Caco-2 (cell line): ENCODE measurements at regions of chr20 and their contacts with region 1.

Region 1: GRCh38 chr20:2651772-2652723 is at the start of gene NOP56:
- DNase-seq: peak; percentile 95 to 99
- H3K4me3 ChIP-seq: peak within 1 kb of the TSS; percentile 99
- H3K4me3 Mint-ChIP-seq: peak within 1 kb of the TSS; percentile 90
- H3K27ac Mint-ChIP-seq: peak within 1 kb of the TSS; percentile 96
- H3K4me1 ChIP-seq: peaks cover 12% of the 10 kb centered on the region
- H3K4me1 Mint-ChIP-seq: peaks cover 7% of the 10 kb centered on the region
- H3K27me3 ChIP-seq: no peaks in the 10 kb centered on the region
- H3K27me3 Mint-ChIP-seq: no peaks in the 10 kb centered on the region
- CTCF ChIP-seq: no peak
- total RNA-seq, gene NOP56: 497 and 524 TPM in 2 replicates

Region 2: GRCh38 chr20:2470423-2471193 is 181.4 kb before region 1 on chr20 and contains the start of gene SNRPB:
- CTCF ChIA-PET with region 1: interaction called, 5 read pairs
- POLR2A ChIA-PET with region 1: interaction called, 13 read pairs
- intact Hi-C with region 1: no loop called
- DNase-seq: peak; percentile 98
- H3K4me3 ChIP-seq: peak within 1 kb of the TSS; percentile 73
- H3K4me3 Mint-ChIP-seq: peak within 1 kb of the TSS; percentile 79
- H3K27ac Mint-ChIP-seq: peak within 1 kb of the TSS; percentile 99
- H3K4me1 ChIP-seq: peaks cover 11% of the 10 kb centered on the region
- H3K4me1 Mint-ChIP-seq: peaks cover 14% of the 10 kb centered on the region
- H3K27me3 ChIP-seq: no peaks in the 10 kb centered on the region
- H3K27me3 Mint-ChIP-seq: no peaks in the 10 kb centered on the region
- CTCF ChIP-seq: no peak
- total RNA-seq, gene SNRPB: 532 and 533 TPM in 2 replicates

Region 3: GRCh38 chr20:2508631-2509467 is 143.2 kb before region 1 on chr20 and contains the start of gene ZNF343:
- CTCF ChIA-PET with region 1: no interaction called
- POLR2A ChIA-PET with region 1: no interaction called
- intact Hi-C with region 1: loop called (anchors 5 kb)
- DNase-seq: peak; percentile 79 to 84
- H3K4me3 ChIP-seq: peak within 1 kb of the TSS; percentile 90
- H3K4me3 Mint-ChIP-seq: peak within 1 kb of the TSS; percentile 88
- H3K27ac Mint-ChIP-seq: peak within 1 kb of the TSS; percentile 92
- H3K4me1 ChIP-seq: peaks cover 13% of the 10 kb centered on the region
- H3K4me1 Mint-ChIP-seq: peaks cover 10% of the 10 kb centered on the region
- H3K27me3 ChIP-seq: no peaks in the 10 kb centered on the region
- H3K27me3 Mint-ChIP-seq: peaks cover 2% of the 10 kb centered on the region
- CTCF ChIP-seq: no peak
- total RNA-seq, gene ZNF343: 8.0 and 11.0 TPM in 2 replicates

Region 4: GRCh38 chr20:2538931-2539720 is 112.9 kb before region 1 on chr20:
- CTCF ChIA-PET with region 1: interaction called, 12 read pairs
- POLR2A ChIA-PET with region 1: no interaction called
- intact Hi-C with region 1: no loop called
- DNase-seq: no peak
- H3K4me3 ChIP-seq: no peak overlapping the region
- H3K4me3 Mint-ChIP-seq: no peak overlapping the region
- H3K27ac Mint-ChIP-seq: no peak overlapping the region
- H3K4me1 ChIP-seq: no peaks in the 10 kb centered on the region
- H3K4me1 Mint-ChIP-seq: no peaks in the 10 kb centered on the region
- H3K27me3 ChIP-seq: no peaks in the 10 kb centered on the region; the same call in 1 of the 2 replicates
- H3K27me3 Mint-ChIP-seq: peaks cover 20% of the 10 kb centered on the region
- CTCF ChIP-seq: no peak

Region 5: GRCh38 chr20:2585811-2586210 is 66.2 kb before region 1 on chr20:
- CTCF ChIA-PET with region 1: no interaction called
- POLR2A ChIA-PET with region 1: no interaction called
- intact Hi-C with region 1: no loop called
- DNase-seq: no peak
- H3K4me3 ChIP-seq: no peak overlapping the region
- H3K4me3 Mint-ChIP-seq: no peak overlapping the region
- H3K27ac Mint-ChIP-seq: no peak overlapping the region
- H3K4me1 ChIP-seq: no peaks in the 10 kb centered on the region
- H3K4me1 Mint-ChIP-seq: no peaks in the 10 kb centered on the region
- H3K27me3 ChIP-seq: no peaks in the 10 kb centered on the region
- H3K27me3 Mint-ChIP-seq: peaks cover 9% of the 10 kb centered on the region
- CTCF ChIP-seq: no peak

Region 6: DNA sequence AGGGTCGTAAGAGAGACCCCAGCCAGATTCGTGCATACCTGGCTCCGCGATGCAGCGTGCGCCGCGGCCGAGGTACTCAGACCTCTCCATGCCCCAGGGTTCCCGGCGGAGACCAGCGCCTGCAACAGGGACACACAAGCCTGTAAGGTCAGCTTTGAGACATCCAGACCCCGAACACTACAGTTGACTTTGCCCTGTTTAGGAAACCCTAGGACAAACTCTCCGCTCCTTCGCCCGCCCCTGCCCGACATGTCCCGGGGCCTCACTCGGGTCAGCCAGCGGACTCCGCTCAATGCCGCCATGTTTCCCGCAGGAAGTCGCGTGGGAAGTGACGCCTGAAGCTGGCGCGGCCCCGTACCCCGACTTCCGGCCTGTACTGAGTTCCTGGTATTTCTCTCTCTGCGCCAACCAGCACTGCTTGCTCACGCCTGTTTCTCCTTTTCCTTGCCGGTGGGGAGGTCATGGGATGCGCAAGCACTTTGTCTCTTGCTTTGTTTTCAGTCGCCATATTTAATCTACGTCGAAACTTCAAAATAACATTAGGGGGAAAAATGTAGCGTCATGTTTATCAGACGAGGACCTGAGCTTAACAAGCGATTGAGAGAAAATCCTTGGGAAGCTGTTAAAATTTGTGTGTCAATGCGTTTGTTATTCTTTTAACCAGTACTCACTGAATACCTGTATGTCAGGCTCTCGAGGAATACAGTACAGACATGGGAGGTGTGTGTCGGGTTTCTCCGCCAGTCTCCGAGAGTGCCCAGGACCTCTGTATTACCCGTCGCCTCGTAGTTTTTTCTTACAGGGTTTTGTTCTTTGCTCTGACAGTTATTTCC is 12.1 kb after region 1 on chr20 and contains the start of gene IDH3B:
- CTCF ChIA-PET with region 1: interaction called, 3 read pairs
- POLR2A ChIA-PET with region 1: interaction called, 25 read pairs
- intact Hi-C with region 1: loop called (anchors 1 kb)
- DNase-seq: peak; percentile 94
- H3K4me3 ChIP-seq: peak within 1 kb of the TSS; percentile 88
- H3K4me3 Mint-ChIP-seq: peak within 1 kb of the TSS; percentile 90
- H3K27ac Mint-ChIP-seq: peak within 1 kb of the TSS; percentile 89
- H3K4me1 ChIP-seq: no peaks in the 10 kb centered on the region; the same call in 1 of the 2 replicates
- H3K4me1 Mint-ChIP-seq: peaks cover 7% of the 10 kb centered on the region
- H3K27me3 ChIP-seq: no peaks in the 10 kb centered on the region
- H3K27me3 Mint-ChIP-seq: peaks cover 5% of the 10 kb centered on the region
- CTCF ChIP-seq: no peak
- total RNA-seq, gene IDH3B: 123 and 137 TPM in 2 replicates

Region 7: DNA sequence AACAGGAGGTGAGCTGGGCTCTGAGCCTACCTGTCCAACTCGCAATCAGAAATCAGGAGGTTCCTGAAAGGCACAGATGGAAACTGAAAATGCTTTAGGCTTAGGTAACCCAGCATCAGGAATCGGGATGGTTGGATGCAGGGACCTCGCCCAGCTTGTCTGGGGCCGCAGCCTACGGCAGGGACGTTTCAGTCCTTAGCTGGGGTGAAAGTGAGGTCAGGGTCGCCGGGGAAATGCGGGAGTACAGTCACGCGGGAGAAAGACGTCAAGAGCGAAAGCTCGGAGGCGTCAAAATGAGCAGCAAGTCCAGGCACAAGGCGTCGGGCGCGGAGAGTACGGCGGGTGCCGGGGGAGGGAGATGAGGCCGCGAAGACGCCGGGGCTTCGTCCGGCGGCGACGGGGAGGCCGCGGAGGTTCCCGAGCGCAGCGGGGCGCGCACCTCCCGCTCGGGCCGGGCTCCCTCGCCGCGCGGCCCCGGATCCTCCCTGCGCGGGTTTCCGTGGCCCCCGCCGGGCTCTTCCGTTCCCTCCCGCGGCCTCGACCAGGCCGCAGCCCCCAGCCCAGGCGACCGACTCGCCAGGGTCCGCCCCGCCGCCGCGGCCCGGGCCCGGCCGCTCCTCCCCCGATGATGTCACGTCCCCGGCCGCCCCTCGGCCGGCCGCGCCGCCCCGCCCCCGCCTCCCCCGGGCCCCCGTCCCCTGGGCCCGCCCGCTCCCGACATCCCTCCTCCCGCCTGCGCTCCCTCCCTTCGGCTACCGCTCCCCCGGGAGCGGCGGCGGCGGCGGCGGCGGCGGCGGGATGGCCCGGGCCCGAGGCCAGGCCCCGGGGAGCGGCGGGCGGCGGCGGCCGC is 40.2 kb after region 1 on chr20 and contains the start of gene EBF4:
- CTCF ChIA-PET with region 1: interaction called, 3 read pairs
- POLR2A ChIA-PET with region 1: interaction called, 16 read pairs
- intact Hi-C with region 1: no loop called
- DNase-seq: peak; percentile 59 to 63
- H3K4me3 ChIP-seq: peak within 1 kb of the TSS; percentile 48
- H3K4me3 Mint-ChIP-seq: peak within 1 kb of the TSS; percentile 91
- H3K27ac Mint-ChIP-seq: peak within 1 kb of the TSS; percentile 84
- H3K4me1 ChIP-seq: peaks cover 6% of the 10 kb centered on the region
- H3K4me1 Mint-ChIP-seq: peaks cover 12% of the 10 kb centered on the region
- H3K27me3 ChIP-seq: peaks cover 1% of the 10 kb centered on the region
- H3K27me3 Mint-ChIP-seq: peaks cover 15% of the 10 kb centered on the region
- CTCF ChIP-seq: no peak
- total RNA-seq, gene EBF4: 5.7 and 7.5 TPM in 2 replicates